ENCODE measurements at regions of chr11 and their contacts with region 1.

Region 1: GRCh38 chr11:56577621-56578020 is at the start of gene OR5M10:
- ATAC-seq: no peak
- H3K4me3 ChIP-seq: no peak within 1 kb of the TSS
- H3K27ac ChIP-seq: no peak within 1 kb of the TSS
- H3K4me1 ChIP-seq: no peaks in the 10 kb centered on the region
- total RNA-seq, gene OR5M10: 0.66 TPM in 1 of 8 experiments, not detected in the others

Region 2: DNA sequence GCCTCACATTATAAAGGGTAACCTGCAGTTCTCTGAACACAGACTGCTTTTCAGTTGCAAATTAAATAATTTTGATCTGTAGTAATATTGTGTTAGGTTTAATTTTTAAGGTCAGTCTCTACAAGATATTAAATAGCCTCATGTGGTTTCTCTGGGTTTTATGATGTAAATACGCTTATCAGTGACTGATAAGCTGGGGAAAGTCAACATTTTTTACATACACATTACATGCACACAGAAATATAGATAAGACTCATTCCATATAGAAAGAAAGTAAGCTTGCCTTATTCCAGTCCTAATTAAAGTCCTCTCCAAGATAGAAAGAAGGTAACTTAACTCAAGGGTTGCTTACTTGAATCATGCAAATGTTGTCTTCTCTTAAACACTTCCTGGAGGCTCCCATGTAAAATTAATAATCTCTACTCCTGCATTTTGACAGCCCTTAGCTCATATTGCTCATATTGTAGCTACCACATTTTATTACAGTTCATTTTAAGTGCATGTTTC is 102.8 kb before region 1 on chr11:
- in situ Hi-C with region 1: no loop called
- ATAC-seq: no peak
- H3K4me3 ChIP-seq: no peak overlapping the region
- H3K27ac ChIP-seq: no peak overlapping the region
- H3K4me1 ChIP-seq: no peaks in the 10 kb centered on the region

Region 3: GRCh38 chr11:56688554-56689100 is 111.0 kb after region 1 on chr11:
- in situ Hi-C with region 1: loop called in 1 of 9 experiments (anchors 25 kb)
- ATAC-seq: no peak
- H3K4me3 ChIP-seq: no peak overlapping the region
- H3K27ac ChIP-seq: no peak overlapping the region
- H3K4me1 ChIP-seq: no peaks in the 10 kb centered on the region